Left cardiac atrium (tissue), 4 donors: ENCODE measurements at regions of chr3 and their contacts with region 1.

Region 1: DNA sequence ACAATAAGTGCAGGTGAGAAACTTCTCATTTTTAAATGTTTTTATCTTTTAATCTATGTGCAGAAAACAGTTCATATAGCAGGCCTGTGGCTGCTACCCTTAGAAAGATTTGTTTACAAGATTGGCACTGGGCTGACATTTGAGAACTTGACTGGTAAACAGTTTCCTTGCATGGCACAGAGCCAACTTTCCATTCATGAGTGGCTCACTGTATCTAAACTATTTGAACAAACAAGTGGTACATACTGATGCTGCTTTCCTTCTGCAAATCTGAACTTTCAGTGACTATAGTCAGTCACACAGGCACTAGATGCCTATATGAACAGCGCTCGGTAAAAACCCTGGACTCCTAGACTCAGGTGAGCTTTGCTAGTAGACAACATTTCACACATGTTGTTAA is 6.3 kb upstream of the GTPBP8 start:
- DNase-seq: no peak
- ATAC-seq: no peak

Region 2: GRCh38 chr3:112734718-112735350 is 249.7 kb before region 1 on chr3:
- intact Hi-C with region 1: loop called in 1 of 2 experiments (anchors 5 kb)
- DNase-seq: peak; percentile 47
- ATAC-seq: peak; percentile 55 to 75

Region 3: DNA sequence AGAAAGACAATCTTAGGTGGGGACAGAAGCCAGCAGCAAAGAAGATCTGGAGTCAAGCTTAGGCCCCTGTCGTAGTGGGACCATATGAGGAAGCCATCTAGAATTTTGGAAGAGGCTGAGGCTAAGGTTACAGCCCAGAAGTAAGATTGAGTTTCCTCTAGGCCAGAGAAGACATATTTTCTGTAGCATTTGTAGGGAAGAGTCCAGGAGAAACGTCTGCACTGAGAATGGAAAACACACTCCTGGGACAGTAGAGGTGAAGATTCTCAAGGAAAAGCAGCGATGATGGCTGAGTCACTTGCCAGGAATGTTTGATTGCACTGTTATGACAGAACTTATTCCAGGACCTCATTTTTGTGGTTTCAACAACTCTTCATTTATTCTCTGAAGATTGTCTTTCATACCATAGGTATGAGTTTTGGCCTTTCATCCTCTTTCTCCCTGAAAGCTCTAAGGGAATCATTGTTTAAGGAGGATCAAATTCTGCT is 113.5 kb after region 1 on chr3:
- intact Hi-C with region 1: no loop called
- DNase-seq: no peak
- ATAC-seq: peak in 1 of 2 donors; percentile 79